H1 (cell line): ENCODE measurements at regions of chr9 and their contacts with region 1.

Region 1: GRCh38 chr9:93302551-93303257 is 118.8 kb downstream of the WNK2 start:
- DNase-seq: peak in 1 of 2 experiments; percentile 73
- H3K4me3 ChIP-seq: no peak overlapping the region
- H3K27ac ChIP-seq: no peak overlapping the region
- H3K4me1 ChIP-seq: peaks cover 0 to 3% (median 0%) of the 10 kb centered on the region in 4 experiments; a peak in 1 of 7 replicates
- H3K27me3 ChIP-seq: no peaks in the 10 kb centered on the region
- CTCF ChIP-seq: peak in 2 of 3 experiments; percentile 68 to 71; a peak in 3 of 4 replicates
- EP300 ChIP-seq: no peak
- POLR2A ChIP-seq: no peak
- RAD21 ChIP-seq: peak; percentile 56 to 66

Region 2: GRCh38 chr9:93111371-93112115 is 191.2 kb before region 1 on chr9:
- CTCF ChIA-PET with region 1: interaction called, 13 read pairs
- POLR2A ChIA-PET with region 1: no interaction called
- DNase-seq: no peak
- H3K4me3 ChIP-seq: no peak overlapping the region
- H3K27ac ChIP-seq: no peak overlapping the region
- H3K4me1 ChIP-seq: peaks cover 0 to 14% (median 9%) of the 10 kb centered on the region in 4 experiments; a peak in 6 of 7 replicates
- H3K27me3 ChIP-seq: no peaks in the 10 kb centered on the region
- CTCF ChIP-seq: no peak
- EP300 ChIP-seq: no peak
- POLR2A ChIP-seq: no peak
- RAD21 ChIP-seq: no peak

Region 3: GRCh38 chr9:93159601-93160471 is 142.9 kb before region 1 on chr9:
- CTCF ChIA-PET with region 1: interaction called, 35 read pairs
- POLR2A ChIA-PET with region 1: interaction called, 4 read pairs
- DNase-seq: peak; percentile 59 to 98
- H3K4me3 ChIP-seq: no peak overlapping the region
- H3K27ac ChIP-seq: no peak overlapping the region
- H3K4me1 ChIP-seq: no peaks in the 10 kb centered on the region
- H3K27me3 ChIP-seq: no peaks in the 10 kb centered on the region
- CTCF ChIP-seq: peak; percentile 97 to 99 (median 99)
- EP300 ChIP-seq: no peak
- POLR2A ChIP-seq: no peak
- RAD21 ChIP-seq: peak; percentile 98 to 99

Region 4: DNA sequence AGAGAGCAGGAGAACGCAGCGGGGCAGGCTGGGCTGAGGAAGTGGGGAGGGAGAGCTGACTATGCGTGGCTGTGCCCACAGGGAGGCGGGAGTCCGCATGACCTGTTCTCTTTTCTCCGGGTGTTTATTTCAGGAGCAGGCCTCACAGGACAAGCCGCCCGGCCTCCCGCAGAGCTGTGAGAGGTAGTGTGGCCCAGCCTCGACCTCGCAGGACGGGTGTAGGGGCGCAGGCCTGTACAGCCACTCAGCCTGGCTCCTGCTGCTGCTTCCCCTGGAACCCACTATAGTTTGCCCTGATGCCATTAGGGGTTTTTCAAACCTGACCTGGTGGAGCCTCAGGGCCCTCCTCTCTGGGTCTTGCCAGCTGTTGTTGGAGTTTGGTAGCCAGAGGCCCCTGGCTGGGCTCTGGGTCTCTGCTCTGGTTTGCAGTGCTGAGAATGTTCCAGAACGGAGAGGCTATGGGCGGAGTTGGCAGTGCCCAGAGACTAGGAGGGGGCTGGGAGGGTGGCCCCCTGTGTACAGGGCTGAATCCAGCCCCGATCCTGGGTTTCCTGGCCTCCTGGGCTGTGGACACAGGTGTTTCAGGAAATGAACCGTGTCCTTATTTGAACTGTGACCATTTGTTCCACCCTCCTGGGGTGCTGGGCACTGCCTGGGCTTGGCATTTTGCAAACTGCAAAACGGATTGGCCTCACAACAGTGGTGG is 40.0 kb before region 1 on chr9:
- CTCF ChIA-PET with region 1: interaction called, 19 read pairs
- POLR2A ChIA-PET with region 1: no interaction called
- DNase-seq: no peak
- H3K4me3 ChIP-seq: no peak overlapping the region
- H3K27ac ChIP-seq: no peak overlapping the region
- H3K4me1 ChIP-seq: no peaks in the 10 kb centered on the region
- H3K27me3 ChIP-seq: no peaks in the 10 kb centered on the region
- CTCF ChIP-seq: no peak
- EP300 ChIP-seq: no peak
- POLR2A ChIP-seq: no peak
- RAD21 ChIP-seq: no peak

Region 5: GRCh38 chr9:93315118-93315517 is 12.4 kb after region 1 on chr9:
- CTCF ChIA-PET with region 1: interaction called, 11 read pairs
- POLR2A ChIA-PET with region 1: interaction called, 3 read pairs
- DNase-seq: no peak
- H3K4me3 ChIP-seq: no peak overlapping the region
- H3K27ac ChIP-seq: no peak overlapping the region
- H3K4me1 ChIP-seq: no peaks in the 10 kb centered on the region
- H3K27me3 ChIP-seq: no peaks in the 10 kb centered on the region
- CTCF ChIP-seq: no peak
- EP300 ChIP-seq: no peak
- POLR2A ChIP-seq: no peak
- RAD21 ChIP-seq: no peak